MCF 10A (cell line): ENCODE measurements at regions of chr20 and their contacts with region 1.

Region 1: GRCh38 chr20:35994994-35995453 is 26.6 kb downstream of the CNBD2 start:
- DNase-seq: peak; percentile 85
- H3K4me3 Mint-ChIP-seq: no peak overlapping the region
- H3K27ac Mint-ChIP-seq: no peak overlapping the region
- H3K4me1 Mint-ChIP-seq: peaks cover 7% of the 10 kb centered on the region
- H3K27me3 Mint-ChIP-seq: peaks cover under 1% of the 10 kb centered on the region
- CTCF ChIP-seq: peak; percentile 86

Region 2: GRCh38 chr20:35768731-35769664 is 226.0 kb before region 1 on chr20:
- CTCF ChIA-PET with region 1: no interaction called
- POLR2A ChIA-PET with region 1: no interaction called
- intact Hi-C with region 1: no loop called
- DNase-seq: peak; percentile 99
- H3K4me3 Mint-ChIP-seq: peak overlapping the region; percentile 11
- H3K27ac Mint-ChIP-seq: peak overlapping the region; percentile 69
- H3K4me1 Mint-ChIP-seq: peaks cover 37% of the 10 kb centered on the region
- H3K27me3 Mint-ChIP-seq: no peaks in the 10 kb centered on the region
- CTCF ChIP-seq: no peak

Region 3: DNA sequence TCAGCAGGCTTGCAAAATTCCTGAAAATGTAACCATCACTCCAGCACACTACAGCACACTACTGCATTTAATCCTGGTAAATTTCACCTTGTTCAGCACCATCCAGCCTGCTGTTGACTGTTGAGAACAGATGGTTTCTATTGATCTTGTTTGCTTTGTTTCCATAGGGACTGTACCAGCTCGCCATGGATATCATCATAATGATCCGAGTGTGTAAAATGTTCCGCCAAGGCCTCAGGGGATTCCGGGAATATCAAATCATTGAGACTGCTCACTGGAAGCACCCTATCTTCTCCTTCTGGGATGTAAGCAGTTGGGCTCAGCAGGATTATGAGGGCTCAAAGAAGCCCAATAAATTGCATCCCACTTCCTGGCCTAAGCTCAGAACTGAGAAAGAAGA is 22.6 kb before region 1 on chr20:
- CTCF ChIA-PET with region 1: interaction called, 141 read pairs
- POLR2A ChIA-PET with region 1: interaction called, 4 read pairs
- intact Hi-C with region 1: no loop called
- DNase-seq: no peak
- H3K4me3 Mint-ChIP-seq: no peak overlapping the region
- H3K27ac Mint-ChIP-seq: no peak overlapping the region
- H3K4me1 Mint-ChIP-seq: no peaks in the 10 kb centered on the region
- H3K27me3 Mint-ChIP-seq: no peaks in the 10 kb centered on the region
- CTCF ChIP-seq: no peak

Region 4: DNA sequence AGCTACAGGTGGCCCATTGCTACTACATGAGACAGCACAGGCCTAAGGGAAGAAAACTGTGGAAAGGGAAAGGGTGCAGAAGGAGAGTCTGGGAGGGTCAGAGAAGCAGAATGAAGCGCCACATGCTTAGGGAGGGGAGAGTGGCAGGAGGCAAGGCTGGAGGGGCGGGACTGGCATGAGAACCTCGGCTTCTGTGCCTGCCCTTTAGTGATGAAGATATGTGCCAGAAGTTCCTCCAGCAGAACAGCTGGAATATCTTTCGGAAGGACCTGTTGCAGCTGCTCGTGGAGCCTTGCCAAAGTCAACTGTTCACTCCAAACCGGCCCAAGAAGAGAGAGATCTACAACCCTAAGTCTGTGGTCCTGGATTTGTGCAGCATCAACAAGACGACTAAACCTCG is 35.1 kb after region 1 on chr20:
- CTCF ChIA-PET with region 1: interaction called, 15 read pairs
- POLR2A ChIA-PET with region 1: interaction called, 6 read pairs
- intact Hi-C with region 1: loop called (anchors 5 kb)
- DNase-seq: no peak
- H3K4me3 Mint-ChIP-seq: no peak overlapping the region
- H3K27ac Mint-ChIP-seq: no peak overlapping the region
- H3K4me1 Mint-ChIP-seq: no peaks in the 10 kb centered on the region
- H3K27me3 Mint-ChIP-seq: peaks cover 12% of the 10 kb centered on the region
- CTCF ChIP-seq: no peak

Region 5: DNA sequence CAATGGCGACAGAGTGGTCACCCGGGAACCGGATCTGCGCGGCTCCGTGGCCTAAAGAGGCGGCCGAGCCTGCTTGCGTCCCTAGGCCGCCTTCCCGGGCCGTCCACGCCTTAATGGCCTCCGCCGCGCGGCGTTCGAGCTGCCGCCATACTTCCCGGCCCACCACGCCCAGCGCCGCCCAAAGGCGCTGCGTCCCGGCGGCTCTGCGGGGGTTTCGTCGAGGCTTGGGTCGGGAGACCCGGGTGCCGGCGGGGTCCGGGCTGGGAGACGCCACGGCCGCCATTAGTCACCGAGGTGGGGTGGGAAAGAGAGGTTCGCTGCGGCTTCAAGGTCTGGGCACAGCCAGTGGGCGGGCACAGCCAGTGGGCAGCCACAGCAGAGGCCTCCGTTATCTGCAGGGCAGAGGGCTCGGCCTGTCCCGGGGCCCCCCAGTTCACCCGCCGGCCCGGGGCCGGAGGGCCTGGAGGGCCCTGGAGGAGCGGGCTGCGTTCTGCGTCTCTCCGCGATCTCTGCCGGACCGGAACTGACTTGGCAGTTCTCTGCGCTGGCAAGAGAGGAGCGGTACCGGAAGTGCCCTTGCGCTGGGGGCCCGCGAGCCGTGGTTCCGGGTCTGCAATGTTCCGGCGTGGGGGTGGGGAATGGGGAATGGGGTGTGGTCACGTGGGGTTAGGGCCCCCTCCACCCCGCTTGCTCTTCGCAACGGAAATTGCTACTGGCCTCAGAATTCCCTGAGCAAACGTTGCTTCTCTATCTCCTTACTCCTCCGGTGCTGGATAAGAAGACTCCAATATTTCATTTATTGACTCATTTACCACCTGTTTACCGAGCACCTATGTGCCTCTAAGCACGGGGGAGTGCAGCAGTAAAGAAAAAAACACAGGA is 55.7 kb after region 1 on chr20:
- CTCF ChIA-PET with region 1: interaction called, 17 read pairs
- POLR2A ChIA-PET with region 1: interaction called, 6 read pairs
- intact Hi-C with region 1: loop called (anchors 2 kb)
- DNase-seq: peak; percentile 82
- H3K4me3 Mint-ChIP-seq: peak overlapping the region; percentile 84
- H3K27ac Mint-ChIP-seq: peak overlapping the region; percentile 93
- H3K4me1 Mint-ChIP-seq: peaks cover 24% of the 10 kb centered on the region
- H3K27me3 Mint-ChIP-seq: no peaks in the 10 kb centered on the region
- CTCF ChIP-seq: no peak

Region 6: GRCh38 chr20:36098364-36098763 is 103.3 kb after region 1 on chr20:
- CTCF ChIA-PET with region 1: interaction called, 66 read pairs
- POLR2A ChIA-PET with region 1: interaction called, 4 read pairs
- intact Hi-C with region 1: no loop called
- DNase-seq: peak; percentile 82
- H3K4me3 Mint-ChIP-seq: no peak overlapping the region
- H3K27ac Mint-ChIP-seq: peak overlapping the region; percentile 63
- H3K4me1 Mint-ChIP-seq: peaks cover 40% of the 10 kb centered on the region
- H3K27me3 Mint-ChIP-seq: no peaks in the 10 kb centered on the region
- CTCF ChIP-seq: no peak

Region 7: DNA sequence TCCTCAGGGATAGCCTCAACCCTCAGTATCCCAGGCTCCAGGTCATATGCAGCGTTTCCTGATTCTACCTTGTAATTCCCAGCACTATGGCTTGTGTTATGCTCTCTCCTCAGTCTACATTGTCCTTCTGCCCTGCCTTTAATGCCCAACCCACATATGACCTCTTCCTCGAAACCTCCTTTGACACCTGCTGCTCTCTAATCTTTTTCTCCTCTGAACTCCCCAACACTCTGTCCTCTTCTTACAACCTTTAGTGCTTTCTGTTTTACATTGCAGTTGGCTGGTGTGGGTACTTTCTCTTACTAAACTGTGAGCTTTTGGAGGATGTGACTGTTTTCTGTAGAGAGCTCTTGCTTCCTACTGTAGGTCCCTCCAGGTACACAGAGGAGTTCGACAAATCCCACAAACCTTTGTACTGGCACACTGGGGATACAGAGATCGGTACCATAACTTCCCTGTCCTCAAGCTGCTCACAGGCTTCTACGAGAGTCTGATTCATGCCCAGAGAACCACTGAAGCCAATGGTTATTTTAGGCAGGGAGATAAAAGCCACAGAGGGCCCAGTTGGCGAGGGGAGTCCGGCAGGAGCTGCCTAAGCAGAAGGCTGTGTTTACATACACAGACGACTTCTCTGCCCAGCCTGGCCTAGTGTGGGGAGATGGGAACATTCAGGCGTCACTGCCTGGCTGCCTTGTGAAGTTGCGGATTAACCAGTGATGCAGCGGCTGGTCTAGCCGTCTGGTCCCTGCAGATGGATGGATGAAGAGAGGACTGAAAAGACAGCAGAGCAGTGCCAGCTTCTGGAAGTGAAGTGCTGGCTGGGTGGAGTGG is 151.1 kb after region 1 on chr20:
- CTCF ChIA-PET with region 1: interaction called, 705 read pairs
- POLR2A ChIA-PET with region 1: interaction called, 11 read pairs
- intact Hi-C with region 1: no loop called
- DNase-seq: no peak
- H3K4me3 Mint-ChIP-seq: no peak overlapping the region
- H3K27ac Mint-ChIP-seq: no peak overlapping the region
- H3K4me1 Mint-ChIP-seq: peaks cover 5% of the 10 kb centered on the region
- H3K27me3 Mint-ChIP-seq: peaks cover 11% of the 10 kb centered on the region
- CTCF ChIP-seq: no peak

Region 8: DNA sequence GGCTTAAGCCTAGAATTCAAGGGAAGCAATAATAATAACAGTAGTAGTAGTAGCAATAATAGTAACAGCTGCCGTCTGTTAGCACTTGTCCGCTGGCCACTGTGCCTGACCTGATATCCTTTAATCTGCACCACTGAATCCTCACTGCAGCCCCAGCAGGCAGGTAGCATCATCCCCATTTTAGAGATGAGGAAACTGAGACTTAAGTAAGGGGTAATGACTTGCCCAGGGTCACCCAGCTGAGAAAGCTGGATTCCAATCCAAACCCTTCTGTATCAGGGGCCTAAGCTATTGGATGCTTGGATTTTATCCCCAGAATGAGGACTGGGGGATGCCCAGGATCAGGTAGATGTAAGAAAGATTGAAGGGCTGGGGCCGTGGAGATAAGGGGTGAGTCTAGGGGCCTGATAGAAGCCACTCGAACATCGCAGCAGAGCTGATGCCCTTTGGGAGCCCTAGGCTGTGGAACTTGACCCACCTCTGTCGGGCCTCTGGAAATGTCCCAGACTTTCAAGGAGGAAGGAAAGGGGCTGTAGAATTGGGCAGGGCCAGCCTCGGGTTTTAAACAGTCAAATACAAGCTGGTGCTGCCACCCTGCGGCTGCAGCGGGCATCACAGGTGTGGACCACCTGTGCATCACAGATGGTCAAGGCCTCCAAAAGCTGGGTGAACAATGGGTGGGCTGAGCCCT is 444.2 kb after region 1 on chr20:
- CTCF ChIA-PET with region 1: interaction called, 10 read pairs
- POLR2A ChIA-PET with region 1: no interaction called
- intact Hi-C with region 1: loop called (anchors 10 kb)
- DNase-seq: peak; percentile 61
- H3K4me3 Mint-ChIP-seq: no peak overlapping the region
- H3K27ac Mint-ChIP-seq: no peak overlapping the region
- H3K4me1 Mint-ChIP-seq: no peaks in the 10 kb centered on the region
- H3K27me3 Mint-ChIP-seq: no peaks in the 10 kb centered on the region
- CTCF ChIP-seq: peak; percentile 96